CD4-positive, alpha-beta T cell (primary cell): ENCODE measurements at regions of chr2 and their contacts with region 1.

Region 1: DNA sequence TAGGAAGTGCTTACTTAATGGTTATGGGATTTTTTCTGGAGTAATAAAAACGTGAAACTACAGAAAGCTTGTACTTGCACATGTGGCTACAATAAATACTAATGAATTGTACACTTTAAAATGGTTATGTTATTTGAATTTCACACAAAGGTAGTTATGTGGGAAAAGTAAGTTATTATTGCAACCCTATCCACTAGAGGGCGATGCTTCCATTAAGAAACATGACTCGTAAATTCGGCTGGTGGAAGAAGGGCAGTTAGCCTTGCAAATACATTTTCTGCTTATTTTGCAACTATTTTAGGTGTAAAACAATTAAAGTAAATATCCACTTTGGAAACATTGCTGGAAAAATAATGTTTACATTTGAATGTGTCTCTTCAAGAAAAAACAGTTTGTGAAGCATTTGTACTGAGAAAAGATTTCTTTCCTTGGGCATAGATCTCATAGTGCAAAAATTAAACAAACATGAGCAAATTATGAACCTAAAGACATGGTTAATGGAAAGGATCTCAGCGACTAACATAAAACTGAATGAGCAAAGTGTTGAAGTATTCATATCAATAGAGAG is 68.1 kb upstream of the CSRNP3 start:
- DNase-seq: peak in 4 of 14 experiments; percentile 10 to 69 (median 56)
- ATAC-seq: no peak
- H3K4me3 ChIP-seq: no peak overlapping the region
- H3K4me3 Mint-ChIP-seq: no peak overlapping the region
- H3K27ac ChIP-seq: no peak overlapping the region
- H3K27ac Mint-ChIP-seq: no peak overlapping the region
- H3K4me1 ChIP-seq: no peaks in the 10 kb centered on the region
- H3K4me1 Mint-ChIP-seq: no peaks in the 10 kb centered on the region
- H3K27me3 ChIP-seq: peaks cover 3 to 4% of the 10 kb centered on the region in 2 experiments
- H3K27me3 Mint-ChIP-seq: peaks cover 17% of the 10 kb centered on the region
- CTCF ChIP-seq: peak; percentile 74

Region 2: DNA sequence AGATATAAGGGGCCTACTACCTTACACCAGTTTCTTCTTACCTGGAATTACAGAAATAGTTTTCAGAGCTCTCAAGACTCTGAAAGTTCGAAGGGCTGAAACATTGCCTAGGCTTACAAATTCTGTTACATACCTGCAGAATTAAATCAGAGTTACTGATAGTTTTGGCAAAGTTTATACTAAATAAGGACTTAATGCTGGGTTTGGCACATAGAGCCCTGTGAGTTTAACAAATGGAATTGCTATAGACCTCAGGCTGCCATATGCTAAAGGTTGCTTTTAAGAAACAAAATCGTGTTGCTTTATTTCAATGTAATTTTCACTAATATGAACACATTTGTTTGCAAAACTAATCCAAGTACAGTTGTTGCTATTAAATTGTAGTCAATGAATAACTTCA is 237.6 kb before region 1 on chr2:
- CTCF ChIA-PET with region 1: no interaction called
- POLR2A ChIA-PET with region 1: no interaction called
- intact Hi-C with region 1: no loop called
- DNase-seq: no peak
- ATAC-seq: no peak
- H3K4me3 ChIP-seq: no peak overlapping the region
- H3K4me3 Mint-ChIP-seq: no peak overlapping the region
- H3K27ac ChIP-seq: no peak overlapping the region
- H3K27ac Mint-ChIP-seq: no peak overlapping the region
- H3K4me1 ChIP-seq: no peaks in the 10 kb centered on the region
- H3K4me1 Mint-ChIP-seq: no peaks in the 10 kb centered on the region
- H3K27me3 ChIP-seq: no peaks in the 10 kb centered on the region
- H3K27me3 Mint-ChIP-seq: no peaks in the 10 kb centered on the region
- CTCF ChIP-seq: no peak

Region 3: GRCh38 chr2:165227571-165227970 is 173.8 kb before region 1 on chr2:
- CTCF ChIA-PET with region 1: no interaction called
- POLR2A ChIA-PET with region 1: no interaction called
- intact Hi-C with region 1: no loop called
- DNase-seq: no peak
- ATAC-seq: no peak
- H3K4me3 ChIP-seq: no peak overlapping the region
- H3K4me3 Mint-ChIP-seq: no peak overlapping the region
- H3K27ac ChIP-seq: no peak overlapping the region
- H3K27ac Mint-ChIP-seq: no peak overlapping the region
- H3K4me1 ChIP-seq: no peaks in the 10 kb centered on the region
- H3K4me1 Mint-ChIP-seq: no peaks in the 10 kb centered on the region
- H3K27me3 ChIP-seq: no peaks in the 10 kb centered on the region
- H3K27me3 Mint-ChIP-seq: no peaks in the 10 kb centered on the region
- CTCF ChIP-seq: no peak

Region 4: DNA sequence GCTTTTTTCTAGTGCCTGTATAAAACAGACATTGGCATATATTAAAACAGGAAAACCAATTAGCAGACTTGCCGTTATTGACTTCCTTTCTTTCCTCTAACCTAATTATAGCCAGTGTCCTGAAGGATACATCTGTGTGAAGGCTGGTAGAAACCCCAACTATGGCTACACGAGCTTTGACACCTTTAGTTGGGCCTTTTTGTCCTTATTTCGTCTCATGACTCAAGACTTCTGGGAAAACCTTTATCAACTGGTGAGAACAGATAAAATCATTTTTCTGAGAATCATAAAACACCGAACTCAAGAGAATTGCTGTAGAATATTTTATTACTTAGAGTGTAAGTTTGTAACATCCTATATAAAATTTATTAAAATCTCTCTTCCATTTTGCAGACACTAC is 87.9 kb before region 1 on chr2:
- CTCF ChIA-PET with region 1: no interaction called
- POLR2A ChIA-PET with region 1: no interaction called
- intact Hi-C with region 1: no loop called
- DNase-seq: no peak
- ATAC-seq: no peak
- H3K4me3 ChIP-seq: no peak overlapping the region
- H3K4me3 Mint-ChIP-seq: no peak overlapping the region
- H3K27ac ChIP-seq: no peak overlapping the region
- H3K27ac Mint-ChIP-seq: no peak overlapping the region
- H3K4me1 ChIP-seq: no peaks in the 10 kb centered on the region
- H3K4me1 Mint-ChIP-seq: no peaks in the 10 kb centered on the region
- H3K27me3 ChIP-seq: no peaks in the 10 kb centered on the region
- H3K27me3 Mint-ChIP-seq: peaks cover 8% of the 10 kb centered on the region
- CTCF ChIP-seq: no peak

Region 5: GRCh38 chr2:165698444-165698894 is 297.1 kb after region 1 on chr2:
- CTCF ChIA-PET with region 1: no interaction called
- POLR2A ChIA-PET with region 1: no interaction called
- intact Hi-C with region 1: loop called in 1 of 2 experiments (anchors 2 kb)
- DNase-seq: peak in 2 of 14 experiments; percentile 6 to 8
- ATAC-seq: no peak
- H3K4me3 ChIP-seq: no peak overlapping the region
- H3K4me3 Mint-ChIP-seq: no peak overlapping the region
- H3K27ac ChIP-seq: no peak overlapping the region
- H3K27ac Mint-ChIP-seq: no peak overlapping the region
- H3K4me1 ChIP-seq: no peaks in the 10 kb centered on the region
- H3K4me1 Mint-ChIP-seq: no peaks in the 10 kb centered on the region
- H3K27me3 ChIP-seq: no peaks in the 10 kb centered on the region
- H3K27me3 Mint-ChIP-seq: peaks cover 4% of the 10 kb centered on the region
- CTCF ChIP-seq: no peak